Activated T-helper 1 cell treated with anti-CD3 and anti-CD28 coated beads, Interleukin-12 subunit alpha, Interleukin-12 subunit beta, Interleukin-2, Interleukin-4 antibody, amounts not matched to agents 30 ng/mL and 10 ng/mL and 1 ng/mL, durations not matched to agents 14 hours and 24 hours and 36 hours (primary cell): ENCODE measurements at regions of chr9 and their contacts with region 1.

Region 1: DNA sequence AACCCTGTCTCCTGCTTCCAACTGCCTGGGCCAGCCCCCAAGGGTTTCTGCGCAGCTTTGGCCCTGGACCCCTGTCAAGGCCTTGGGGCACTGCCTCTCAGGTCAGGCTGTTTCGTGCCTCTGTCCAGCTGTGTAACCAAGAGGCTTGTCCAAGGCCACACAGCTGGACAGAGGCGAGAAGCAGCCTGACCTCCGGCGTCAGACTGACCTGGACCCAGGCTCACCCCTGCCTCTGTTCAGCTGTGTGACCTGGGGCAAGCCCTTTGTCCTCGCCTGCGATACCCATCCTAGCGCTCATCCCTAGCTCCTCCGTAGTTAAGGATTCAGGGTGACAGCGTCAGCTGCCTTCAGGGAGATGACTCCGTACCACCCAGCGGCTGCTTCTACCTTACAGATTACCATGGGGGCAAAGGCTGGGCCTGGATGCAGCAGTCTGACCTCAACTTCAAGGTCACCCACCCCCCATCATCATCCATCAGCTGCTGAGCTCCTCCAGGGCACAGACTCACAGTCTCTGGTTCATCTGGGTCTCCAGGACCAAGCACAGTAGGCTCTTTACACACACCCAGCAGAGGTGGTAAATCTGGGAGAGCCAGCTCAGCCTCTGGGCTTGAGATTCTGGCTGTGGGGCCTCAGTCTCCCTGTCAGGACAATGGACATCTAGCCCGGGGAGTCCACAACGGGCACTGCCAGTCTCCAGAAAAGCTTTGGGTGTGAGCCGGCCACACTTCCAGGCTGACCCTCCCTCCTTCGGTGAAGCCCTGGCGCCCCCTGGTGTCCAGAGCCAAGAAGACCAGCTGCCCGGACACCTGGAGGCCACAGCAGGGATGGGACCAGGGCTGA is 7.9 kb downstream of the AK1 start:
- DNase-seq: peak; percentile 69
- H3K4me3 Mint-ChIP-seq: no peak overlapping the region
- H3K27ac Mint-ChIP-seq: no peak overlapping the region
- H3K4me1 Mint-ChIP-seq: peaks cover 12% of the 10 kb centered on the region
- H3K27me3 Mint-ChIP-seq: no peaks in the 10 kb centered on the region

Region 2: DNA sequence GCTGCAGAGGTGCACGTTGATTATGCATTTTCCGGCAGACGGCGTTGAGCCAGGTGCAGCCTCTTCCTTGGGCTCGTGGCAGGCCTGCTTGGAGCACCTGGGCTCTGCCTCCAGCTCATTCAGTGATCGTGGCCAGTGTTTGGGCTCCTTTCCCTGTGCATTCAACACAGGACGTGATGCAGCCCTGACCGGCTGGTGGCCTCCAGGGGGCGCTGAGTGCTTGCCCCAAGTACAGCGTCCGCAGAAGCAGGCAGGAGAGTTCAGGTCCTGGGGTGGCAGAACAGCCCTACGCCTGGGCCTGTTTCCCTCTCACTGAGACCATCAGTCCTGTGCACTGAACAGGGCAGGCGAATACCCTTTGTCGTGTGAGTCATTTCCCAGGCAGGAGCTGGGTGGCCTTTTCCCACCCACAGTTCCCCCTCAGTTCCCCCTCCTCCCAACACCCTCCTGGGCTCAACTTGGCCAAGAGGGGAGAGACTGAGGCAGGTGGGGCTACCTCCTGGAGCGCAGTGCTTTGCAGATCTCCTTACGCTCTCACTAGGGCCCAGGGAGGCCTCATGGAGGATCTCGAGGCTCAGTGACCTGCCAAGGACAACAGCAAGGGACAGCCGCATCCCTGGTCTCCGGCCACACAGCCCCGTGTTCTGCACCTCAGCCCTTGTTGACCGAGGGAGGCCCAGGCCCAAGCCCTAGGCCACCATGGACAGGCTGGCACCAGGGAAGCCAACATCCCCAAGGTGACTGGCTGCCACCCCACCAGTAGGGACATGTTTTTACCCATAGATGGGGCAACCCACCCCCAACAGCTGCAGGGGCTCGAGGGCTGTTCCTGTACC is 365.4 kb before region 1 on chr9:
- intact Hi-C with region 1: loop called (anchors 5 kb)
- DNase-seq: peak; percentile 70
- H3K4me3 Mint-ChIP-seq: no peak overlapping the region
- H3K27ac Mint-ChIP-seq: no peak overlapping the region
- H3K4me1 Mint-ChIP-seq: peaks cover 5% of the 10 kb centered on the region
- H3K27me3 Mint-ChIP-seq: no peaks in the 10 kb centered on the region

Region 3: GRCh38 chr9:127586537-127586936 is 283.0 kb before region 1 on chr9:
- intact Hi-C with region 1: loop called (anchors 1 kb)
- DNase-seq: peak; percentile 33
- H3K4me3 Mint-ChIP-seq: no peak overlapping the region
- H3K27ac Mint-ChIP-seq: no peak overlapping the region
- H3K4me1 Mint-ChIP-seq: peaks cover 11% of the 10 kb centered on the region
- H3K27me3 Mint-ChIP-seq: peaks cover 14% of the 10 kb centered on the region

Region 4: DNA sequence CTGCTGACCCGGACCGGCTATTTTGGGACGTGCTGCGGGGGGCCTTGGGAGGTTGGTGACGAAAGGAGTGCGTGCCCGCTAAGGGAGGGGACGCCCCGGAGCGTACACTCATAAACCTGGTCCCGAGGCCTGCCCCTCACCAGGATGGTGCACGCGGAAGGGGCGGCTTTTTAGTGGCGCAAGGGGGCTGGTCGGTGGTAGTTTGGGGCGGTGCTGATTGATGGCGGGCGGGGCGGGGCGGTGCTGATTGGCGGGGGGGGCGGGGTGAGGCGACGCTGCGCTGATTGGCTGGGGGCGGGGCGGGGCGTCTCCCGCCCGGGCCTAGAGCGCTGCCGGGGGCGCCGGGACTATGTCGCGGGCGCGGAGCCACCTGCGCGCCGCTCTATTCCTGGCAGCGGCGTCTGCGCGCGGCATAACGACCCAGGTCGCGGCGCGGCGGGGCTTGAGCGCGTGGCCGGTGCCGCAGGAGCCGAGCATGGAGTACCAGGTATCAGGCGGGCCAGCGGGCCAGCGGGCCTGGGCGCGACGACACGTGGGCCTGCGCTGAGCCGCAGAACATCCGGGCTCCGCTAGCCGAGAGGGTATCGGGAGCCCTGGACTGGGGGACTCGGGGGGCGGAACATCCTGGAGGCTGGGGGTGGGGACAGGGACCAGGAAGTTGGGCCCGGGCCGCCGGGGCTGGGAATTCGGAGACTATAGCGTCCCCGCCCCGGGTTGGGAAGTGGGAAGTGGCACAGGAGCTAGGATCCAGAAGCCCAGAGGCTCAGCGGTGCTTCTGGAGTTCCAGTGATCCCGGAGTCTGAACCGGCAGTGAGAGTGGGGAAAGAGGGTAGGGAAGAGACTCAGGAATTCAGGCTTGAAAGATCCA is 66.7 kb before region 1 on chr9 and contains the start of gene FPGS:
- intact Hi-C with region 1: loop called (anchors 2 kb)
- DNase-seq: peak; percentile 74
- H3K4me3 Mint-ChIP-seq: peak within 1 kb of the TSS; percentile 97
- H3K27ac Mint-ChIP-seq: peak within 1 kb of the TSS; percentile 93
- H3K4me1 Mint-ChIP-seq: peaks cover 17% of the 10 kb centered on the region
- H3K27me3 Mint-ChIP-seq: no peaks in the 10 kb centered on the region
- total RNA-seq, gene FPGS: 128 and 130 TPM in 2 replicates